ENCODE measurements at regions of chr15 and their contacts with region 1.

Region 1: DNA sequence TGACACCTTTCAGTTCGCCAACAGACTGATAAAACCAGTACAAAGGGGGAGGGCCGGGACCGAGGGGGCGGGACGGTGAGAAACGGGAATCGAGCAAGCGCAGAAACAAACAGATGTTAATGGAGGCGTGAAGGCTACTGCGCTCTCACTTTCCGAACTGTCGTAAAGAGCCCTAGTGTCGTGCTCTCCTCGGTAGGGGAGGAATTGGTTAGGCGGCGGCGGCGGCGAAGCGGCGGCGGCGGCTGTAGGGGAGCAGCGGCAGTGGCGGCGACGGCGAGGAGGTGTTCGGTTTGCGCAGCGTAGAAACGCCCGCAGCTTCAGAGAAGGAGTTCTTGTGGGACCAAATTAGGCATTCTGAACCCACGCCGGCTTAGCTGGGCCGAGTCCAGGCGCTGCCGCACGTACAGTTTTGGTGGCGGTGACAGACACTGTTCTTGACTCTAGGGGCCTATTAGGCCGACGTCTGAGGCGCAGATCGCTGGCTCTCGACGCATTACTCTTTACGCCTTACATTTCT is at the start of gene RNF111:
- DNase-seq: peak; percentile 66 to 94 (median 90)
- ATAC-seq: peak; percentile 98
- H3K4me3 ChIP-seq: peak within 1 kb of the TSS; percentile 83
- H3K4me3 Mint-ChIP-seq: peak within 1 kb of the TSS; percentile 89 to 100 (median 96)
- H3K27ac ChIP-seq: peak within 1 kb of the TSS; percentile 91
- H3K27ac Mint-ChIP-seq: peak within 1 kb of the TSS; percentile 87 to 96 (median 94)
- H3K4me1 ChIP-seq: peaks cover 17 to 25% of the 10 kb centered on the region in 2 donors
- H3K4me1 Mint-ChIP-seq: peaks cover 33 to 56% (median 53%) of the 10 kb centered on the region in 7 donors
- H3K27me3 ChIP-seq: no peaks in the 10 kb centered on the region
- H3K27me3 Mint-ChIP-seq: peaks cover 0 to 13% (median 0%) of the 10 kb centered on the region in 5 donors
- total RNA-seq, gene RNF111: 50.8 to 61.1 (median 57.9) TPM

Region 2: GRCh38 chr15:58770857-58771620 is 216.5 kb before region 1 on chr15 and contains the start of gene MINDY2:
- CTCF ChIA-PET with region 1: no interaction called
- POLR2A ChIA-PET with region 1: no interaction called
- intact Hi-C with region 1: loop called (anchors 1 to 5 kb)
- DNase-seq: peak; percentile 85 to 92 (median 90)
- ATAC-seq: peak; percentile 98
- H3K4me3 ChIP-seq: peak within 1 kb of the TSS; percentile 83
- H3K4me3 Mint-ChIP-seq: peak within 1 kb of the TSS in 2 of 10 donors; percentile 2 to 20
- H3K27ac ChIP-seq: peak within 1 kb of the TSS; percentile 90
- H3K27ac Mint-ChIP-seq: peak within 1 kb of the TSS in 7 of 9 donors; percentile 86 to 96 (median 93)
- H3K4me1 ChIP-seq: peaks cover 24 to 32% of the 10 kb centered on the region in 2 donors
- H3K4me1 Mint-ChIP-seq: peaks cover 0 to 21% (median 9%) of the 10 kb centered on the region in 7 donors
- H3K27me3 ChIP-seq: no peaks in the 10 kb centered on the region
- H3K27me3 Mint-ChIP-seq: no peaks in the 10 kb centered on the region
- total RNA-seq, gene MINDY2: 10.4 to 16.6 (median 11.5) TPM

Region 3: GRCh38 chr15:59104912-59105732 is 117.6 kb after region 1 on chr15 and contains the start of gene CCNB2:
- CTCF ChIA-PET with region 1: no interaction called
- POLR2A ChIA-PET with region 1: no interaction called
- intact Hi-C with region 1: loop called (anchors 1 kb)
- DNase-seq: peak; percentile 63 to 91 (median 87)
- ATAC-seq: peak; percentile 100
- H3K4me3 ChIP-seq: peak within 1 kb of the TSS; percentile 77
- H3K4me3 Mint-ChIP-seq: peak within 1 kb of the TSS; percentile 89 to 100 (median 93)
- H3K27ac ChIP-seq: peak within 1 kb of the TSS; percentile 71
- H3K27ac Mint-ChIP-seq: peak within 1 kb of the TSS; percentile 94 to 100 (median 98)
- H3K4me1 ChIP-seq: peaks cover 7 to 11% of the 10 kb centered on the region in 2 donors
- H3K4me1 Mint-ChIP-seq: peaks cover 9 to 49% (median 13%) of the 10 kb centered on the region in 7 donors
- H3K27me3 ChIP-seq: no peaks in the 10 kb centered on the region
- H3K27me3 Mint-ChIP-seq: no peaks in the 10 kb centered on the region
- total RNA-seq, gene CCNB2: 0.27 to 52.2 (median 0.41) TPM

Region 4: DNA sequence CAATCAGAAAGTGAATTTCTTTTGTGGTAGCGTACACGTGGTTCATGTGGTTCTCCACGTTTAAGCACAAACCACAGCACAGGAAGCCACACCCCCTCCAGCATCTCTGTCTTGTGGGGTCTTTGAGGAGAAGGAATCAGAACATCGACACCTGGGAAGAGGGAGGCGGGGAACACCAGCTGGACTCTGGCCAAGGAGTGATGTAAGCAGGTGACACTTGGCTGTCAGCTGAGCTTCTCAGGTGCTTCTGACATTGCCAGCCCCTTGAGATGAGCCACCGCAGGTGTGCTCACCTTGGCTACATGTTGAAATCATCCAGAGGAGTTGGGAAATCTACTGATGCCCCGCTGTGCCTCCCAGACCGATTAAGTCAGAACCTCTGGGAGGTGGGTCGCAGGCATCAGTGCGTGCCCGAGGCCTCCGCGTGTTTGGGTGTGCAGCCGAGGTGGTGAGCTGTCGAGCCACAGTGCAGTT is 535.5 kb after region 1 on chr15:
- CTCF ChIA-PET with region 1: no interaction called
- POLR2A ChIA-PET with region 1: interaction called, 5 read pairs
- intact Hi-C with region 1: loop called in 1 of 2 experiments (anchors 1 kb)
- DNase-seq: peak in 8 of 9 donors; percentile 41 to 81 (median 74)
- ATAC-seq: peak; percentile 92
- H3K4me3 ChIP-seq: no peak overlapping the region
- H3K4me3 Mint-ChIP-seq: peak overlapping the region; percentile 26 to 82 (median 74)
- H3K27ac ChIP-seq: no peak overlapping the region
- H3K27ac Mint-ChIP-seq: peak overlapping the region; percentile 13 to 90 (median 81)
- H3K4me1 ChIP-seq: peaks cover 12 to 26% of the 10 kb centered on the region in 2 donors
- H3K4me1 Mint-ChIP-seq: peaks cover 15 to 58% (median 40%) of the 10 kb centered on the region in 7 donors
- H3K27me3 ChIP-seq: no peaks in the 10 kb centered on the region
- H3K27me3 Mint-ChIP-seq: peaks cover 0 to 26% (median 0%) of the 10 kb centered on the region in 5 donors

Region 5: DNA sequence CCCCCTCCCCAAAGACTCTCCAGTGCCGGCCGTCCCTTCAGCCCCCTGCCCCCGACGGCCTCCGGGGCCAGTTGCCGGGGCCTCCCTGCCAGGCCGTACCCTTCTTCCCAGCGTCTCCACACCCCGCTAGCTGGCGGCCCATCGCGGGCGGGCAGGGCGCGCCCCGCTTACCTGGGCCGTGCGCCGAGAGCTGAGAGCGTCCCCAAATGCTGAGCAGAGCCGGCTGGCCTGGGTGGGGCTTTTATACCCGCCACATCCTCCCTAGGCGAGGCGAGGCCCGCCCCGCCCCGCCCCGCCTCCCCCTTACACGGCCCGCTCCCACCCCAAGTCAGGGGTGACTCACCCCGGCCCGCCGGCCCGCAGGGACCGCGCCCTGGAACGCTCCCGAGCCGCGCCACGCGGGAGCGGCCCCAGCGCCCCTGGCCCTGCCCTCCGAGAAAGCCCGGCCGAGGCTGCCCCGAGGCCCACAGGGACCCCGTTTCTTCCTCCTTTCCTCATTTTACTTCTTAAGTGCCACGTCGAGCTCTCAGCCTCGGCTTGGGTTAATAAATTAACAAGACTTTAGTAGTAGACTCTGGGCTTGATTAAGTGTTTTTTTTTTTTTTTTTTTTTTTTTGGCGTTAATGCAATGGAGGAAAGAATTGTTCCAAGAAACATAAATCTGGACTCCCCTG is 1410.4 kb after region 1 on chr15 and contains the start of gene ANXA2:
- CTCF ChIA-PET with region 1: no interaction called
- POLR2A ChIA-PET with region 1: no interaction called
- intact Hi-C with region 1: loop called in 1 of 2 experiments (anchors 5 kb)
- DNase-seq: peak; percentile 49 to 85 (median 62)
- ATAC-seq: peak; percentile 81
- H3K4me3 ChIP-seq: peak within 1 kb of the TSS; percentile 72
- H3K4me3 Mint-ChIP-seq: peak within 1 kb of the TSS; percentile 83 to 98 (median 87)
- H3K27ac ChIP-seq: peak within 1 kb of the TSS; percentile 61
- H3K27ac Mint-ChIP-seq: peak within 1 kb of the TSS; percentile 87 to 98 (median 95)
- H3K4me1 ChIP-seq: peaks cover 6 to 32% of the 10 kb centered on the region in 2 donors
- H3K4me1 Mint-ChIP-seq: peaks cover 10 to 67% (median 33%) of the 10 kb centered on the region in 7 donors
- H3K27me3 ChIP-seq: no peaks in the 10 kb centered on the region
- H3K27me3 Mint-ChIP-seq: peaks cover 0 to 7% (median 0%) of the 10 kb centered on the region in 5 donors
- total RNA-seq, gene ANXA2: 28.8 to 377 (median 42.4) TPM

Measured in naive thymus-derived CD4-positive, alpha-beta T cell (primary cell).